ENCODE measurements at regions of chr9 and their contacts with region 1.

Region 1: GRCh38 chr9:95189251-95190098 is 128.0 kb downstream of the FANCC start:
- DNase-seq: peak; percentile 95
- H3K4me3 ChIP-seq: peak overlapping the region in 2 of 3 experiments; percentile 24 to 41
- H3K27ac ChIP-seq: peak overlapping the region; percentile 89
- H3K4me1 ChIP-seq: peaks cover 25% of the 10 kb centered on the region
- H3K27me3 ChIP-seq: no peaks in the 10 kb centered on the region
- CTCF ChIP-seq: no peak
- POLR2A ChIP-seq: no peak

Region 2: GRCh38 chr9:95087659-95088242 is 101.7 kb before region 1 on chr9:
- CTCF ChIA-PET with region 1: no interaction called
- POLR2A ChIA-PET with region 1: no interaction called
- dilution Hi-C with region 1: no loop called
- intact Hi-C with region 1: no loop called
- DNase-seq: no peak
- H3K4me3 ChIP-seq: no peak overlapping the region
- H3K27ac ChIP-seq: no peak overlapping the region
- H3K4me1 ChIP-seq: no peaks in the 10 kb centered on the region
- H3K27me3 ChIP-seq: no peaks in the 10 kb centered on the region
- CTCF ChIP-seq: peak in 1 of 2 donors; percentile 17
- POLR2A ChIP-seq: no peak

Region 3: GRCh38 chr9:95103385-95103784 is 86.1 kb before region 1 on chr9:
- CTCF ChIA-PET with region 1: no interaction called
- POLR2A ChIA-PET with region 1: no interaction called
- dilution Hi-C with region 1: no loop called
- intact Hi-C with region 1: no loop called
- DNase-seq: no peak
- H3K4me3 ChIP-seq: no peak overlapping the region
- H3K27ac ChIP-seq: no peak overlapping the region
- H3K4me1 ChIP-seq: peaks cover 5% of the 10 kb centered on the region
- H3K27me3 ChIP-seq: no peaks in the 10 kb centered on the region
- CTCF ChIP-seq: no peak
- POLR2A ChIP-seq: no peak

Region 4: DNA sequence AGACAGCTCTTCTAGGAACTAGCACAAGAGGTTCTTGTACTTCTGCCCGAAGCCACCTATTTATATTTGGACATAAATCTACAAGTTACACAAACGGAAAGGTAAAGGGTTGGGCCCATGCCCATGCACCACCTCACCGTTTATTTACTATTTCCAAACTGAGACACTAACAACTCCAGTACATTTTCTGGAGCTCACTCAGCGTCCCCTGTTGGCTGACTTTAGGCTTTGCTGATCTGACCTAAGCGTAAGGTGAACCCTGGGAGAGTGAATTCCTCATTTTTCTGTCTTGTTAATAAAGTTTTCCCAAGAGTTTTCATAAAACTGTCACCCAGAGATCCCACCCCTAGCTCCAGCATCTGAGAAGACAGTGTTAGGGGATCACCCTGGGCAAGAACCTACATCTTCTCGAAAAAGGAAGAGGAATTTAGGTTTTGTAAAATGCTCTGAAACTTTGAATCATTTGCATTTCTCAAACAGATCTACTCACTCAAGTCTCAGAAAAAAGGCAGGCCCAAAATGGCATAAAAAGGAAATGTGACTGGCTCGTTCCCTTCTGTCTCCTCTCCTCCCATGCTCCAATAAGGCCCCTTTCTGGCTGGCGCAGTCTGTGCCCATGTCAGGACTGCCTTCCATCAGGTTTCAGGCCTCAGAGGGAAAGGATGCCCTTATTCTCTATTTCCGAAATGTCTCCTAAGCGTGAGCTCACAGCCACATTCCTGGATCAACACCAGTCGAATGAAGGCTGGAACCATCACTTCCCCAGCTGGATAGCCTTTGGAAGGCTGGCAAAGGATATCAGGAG is 73.3 kb before region 1 on chr9:
- CTCF ChIA-PET with region 1: no interaction called
- POLR2A ChIA-PET with region 1: no interaction called
- dilution Hi-C with region 1: no loop called
- intact Hi-C with region 1: no loop called
- DNase-seq: no peak
- H3K4me3 ChIP-seq: no peak overlapping the region
- H3K27ac ChIP-seq: no peak overlapping the region
- H3K4me1 ChIP-seq: no peaks in the 10 kb centered on the region
- H3K27me3 ChIP-seq: no peaks in the 10 kb centered on the region
- CTCF ChIP-seq: no peak
- POLR2A ChIP-seq: no peak

Region 5: GRCh38 chr9:95724253-95724991 is 534.9 kb after region 1 on chr9:
- CTCF ChIA-PET with region 1: no interaction called
- POLR2A ChIA-PET with region 1: no interaction called
- dilution Hi-C with region 1: no loop called
- intact Hi-C with region 1: no loop called
- DNase-seq: no peak
- H3K4me3 ChIP-seq: no peak overlapping the region
- H3K27ac ChIP-seq: no peak overlapping the region
- H3K4me1 ChIP-seq: no peaks in the 10 kb centered on the region
- H3K27me3 ChIP-seq: no peaks in the 10 kb centered on the region
- CTCF ChIP-seq: no peak
- POLR2A ChIP-seq: no peak

Region 6: DNA sequence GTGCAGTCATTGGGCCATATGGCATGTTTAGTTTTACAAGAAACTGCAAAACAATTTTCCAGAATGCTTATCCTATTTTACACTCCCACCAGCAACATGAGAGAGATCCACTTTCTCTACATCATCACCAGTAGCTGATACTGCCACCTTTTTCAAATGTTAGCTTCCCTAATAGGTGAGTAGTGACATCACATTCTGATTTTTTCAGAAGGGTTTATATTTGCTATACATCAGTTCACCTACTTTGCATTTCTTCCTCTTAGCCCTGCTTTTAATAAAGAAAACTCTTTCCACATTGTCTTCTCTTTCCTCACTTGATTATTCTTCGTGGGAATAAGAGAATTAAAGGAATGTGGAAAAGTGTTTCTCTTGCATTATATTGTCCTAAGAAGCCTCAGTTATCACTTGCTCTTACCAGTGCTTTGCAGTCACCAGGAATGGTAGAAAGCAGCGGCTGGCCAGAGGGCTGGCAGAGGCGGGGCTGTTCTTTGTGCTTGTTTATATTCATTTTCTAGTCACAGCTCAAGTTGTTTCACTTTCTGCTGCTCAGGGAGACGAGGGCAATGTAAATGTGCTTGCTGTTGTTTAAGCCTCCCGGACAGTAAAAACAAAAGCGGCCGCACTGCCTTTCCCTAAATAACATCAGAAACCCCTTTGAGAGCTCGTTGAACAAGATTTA is 947.7 kb after region 1 on chr9:
- CTCF ChIA-PET with region 1: no interaction called
- POLR2A ChIA-PET with region 1: no interaction called
- dilution Hi-C with region 1: no loop called
- intact Hi-C with region 1: loop called (anchors 2 kb)
- DNase-seq: peak; percentile 56
- H3K4me3 ChIP-seq: no peak overlapping the region
- H3K27ac ChIP-seq: no peak overlapping the region
- H3K4me1 ChIP-seq: peaks cover 17% of the 10 kb centered on the region
- H3K27me3 ChIP-seq: peaks cover 0 to 2% of the 10 kb centered on the region in 2 experiments
- CTCF ChIP-seq: no peak
- POLR2A ChIP-seq: no peak

Measured in endothelial cell of umbilical vein (primary cell).